ENCODE measurements at regions of chr1 and their contacts with region 1.

Region 1: GRCh38 chr1:84781946-84782771 is 91.9 kb upstream of the SSX2IP start:
- DNase-seq: peak; percentile 91
- ATAC-seq: peak; percentile 95
- H3K4me3 Mint-ChIP-seq: peak overlapping the region; percentile 54
- H3K27ac Mint-ChIP-seq: peak overlapping the region; percentile 64
- H3K4me1 Mint-ChIP-seq: peaks cover 15% of the 10 kb centered on the region
- H3K27me3 Mint-ChIP-seq: no peaks in the 10 kb centered on the region
- CTCF ChIP-seq: peak; percentile 80

Region 2: GRCh38 chr1:83990749-83991148 is 791.4 kb before region 1 on chr1:
- CTCF ChIA-PET with region 1: no interaction called
- POLR2A ChIA-PET with region 1: no interaction called
- DNase-seq: no peak
- ATAC-seq: no peak
- H3K4me3 Mint-ChIP-seq: no peak overlapping the region
- H3K27ac Mint-ChIP-seq: no peak overlapping the region
- H3K4me1 Mint-ChIP-seq: no peaks in the 10 kb centered on the region
- H3K27me3 Mint-ChIP-seq: no peaks in the 10 kb centered on the region
- CTCF ChIP-seq: no peak

Region 3: DNA sequence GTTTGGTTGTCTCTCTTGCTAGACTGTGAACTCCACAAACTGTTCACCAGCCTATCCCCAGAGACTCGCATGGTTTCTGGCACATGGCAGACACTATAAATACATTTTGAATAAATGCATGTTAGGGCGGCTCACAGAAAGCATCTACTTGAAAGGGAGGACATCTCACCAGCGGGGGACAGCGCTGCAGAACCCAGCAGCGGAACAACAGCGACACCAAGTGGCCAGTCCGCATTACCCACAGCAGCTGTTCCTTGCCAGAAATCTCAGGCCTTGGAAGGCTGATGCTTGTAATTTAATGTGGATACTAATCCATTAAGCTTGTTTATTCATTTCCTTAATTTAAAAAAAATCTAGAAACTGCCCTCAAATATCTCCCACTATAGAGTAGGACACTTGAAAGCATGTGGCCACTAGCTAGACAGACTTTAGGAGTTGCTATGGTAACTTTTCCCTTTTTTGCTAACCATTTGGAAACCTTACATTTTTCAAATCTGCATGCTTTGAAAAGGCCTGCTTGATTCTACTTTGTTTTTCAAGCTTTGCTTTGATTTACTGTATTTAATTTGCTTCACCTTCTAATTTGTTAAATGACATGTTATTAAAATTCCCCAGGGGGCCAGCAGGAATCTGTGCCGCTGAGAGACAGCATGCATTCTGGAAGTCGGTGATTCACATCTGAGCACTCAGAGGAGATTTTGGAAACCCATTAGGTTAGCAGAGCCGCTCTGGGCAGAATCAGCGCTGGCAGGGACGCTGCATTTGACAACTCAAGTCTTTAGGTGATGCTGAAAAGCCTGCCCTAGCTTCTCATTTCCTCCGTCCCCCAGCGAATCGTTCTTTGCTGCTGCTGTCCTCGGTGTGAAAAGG is 28.4 kb before region 1 on chr1:
- CTCF ChIA-PET with region 1: interaction called, 16 read pairs
- POLR2A ChIA-PET with region 1: no interaction called
- DNase-seq: peak; percentile 78
- ATAC-seq: peak; percentile 89
- H3K4me3 Mint-ChIP-seq: no peak overlapping the region
- H3K27ac Mint-ChIP-seq: no peak overlapping the region
- H3K4me1 Mint-ChIP-seq: peaks cover 59% of the 10 kb centered on the region
- H3K27me3 Mint-ChIP-seq: no peaks in the 10 kb centered on the region
- CTCF ChIP-seq: peak; percentile 84

Region 4: GRCh38 chr1:84763912-84764663 is 18.1 kb before region 1 on chr1:
- CTCF ChIA-PET with region 1: interaction called, 12 read pairs
- POLR2A ChIA-PET with region 1: no interaction called
- DNase-seq: peak; percentile 40
- ATAC-seq: peak; percentile 95
- H3K4me3 Mint-ChIP-seq: peak overlapping the region; percentile 36
- H3K27ac Mint-ChIP-seq: peak overlapping the region; percentile 4; the same call in 1 of the 2 replicates
- H3K4me1 Mint-ChIP-seq: peaks cover 17% of the 10 kb centered on the region
- H3K27me3 Mint-ChIP-seq: peaks cover 7% of the 10 kb centered on the region
- CTCF ChIP-seq: no peak

Region 5: GRCh38 chr1:84803604-84804003 is 21.4 kb after region 1 on chr1:
- CTCF ChIA-PET with region 1: interaction called, 13 read pairs
- POLR2A ChIA-PET with region 1: no interaction called
- DNase-seq: no peak
- ATAC-seq: no peak
- H3K4me3 Mint-ChIP-seq: no peak overlapping the region
- H3K27ac Mint-ChIP-seq: no peak overlapping the region
- H3K4me1 Mint-ChIP-seq: no peaks in the 10 kb centered on the region
- H3K27me3 Mint-ChIP-seq: no peaks in the 10 kb centered on the region
- CTCF ChIP-seq: no peak

Region 6: GRCh38 chr1:84842748-84843231 is 60.6 kb after region 1 on chr1:
- CTCF ChIA-PET with region 1: interaction called, 12 read pairs
- POLR2A ChIA-PET with region 1: no interaction called
- DNase-seq: no peak
- ATAC-seq: peak; percentile 73
- H3K4me3 Mint-ChIP-seq: no peak overlapping the region
- H3K27ac Mint-ChIP-seq: no peak overlapping the region; the same call in 1 of the 2 replicates
- H3K4me1 Mint-ChIP-seq: peaks cover 21% of the 10 kb centered on the region
- H3K27me3 Mint-ChIP-seq: no peaks in the 10 kb centered on the region
- CTCF ChIP-seq: no peak

Region 7: GRCh38 chr1:84936116-84936810 is 154.1 kb after region 1 on chr1:
- CTCF ChIA-PET with region 1: interaction called, 33 read pairs
- POLR2A ChIA-PET with region 1: no interaction called
- DNase-seq: no peak
- ATAC-seq: peak; percentile 78
- H3K4me3 Mint-ChIP-seq: no peak overlapping the region
- H3K27ac Mint-ChIP-seq: no peak overlapping the region
- H3K4me1 Mint-ChIP-seq: peaks cover 10% of the 10 kb centered on the region
- H3K27me3 Mint-ChIP-seq: no peaks in the 10 kb centered on the region; the same call in 1 of the 2 replicates
- CTCF ChIP-seq: peak; percentile 86

Region 8: GRCh38 chr1:84968101-84968500 is 185.9 kb after region 1 on chr1:
- CTCF ChIA-PET with region 1: no interaction called
- POLR2A ChIA-PET with region 1: no interaction called
- DNase-seq: no peak
- ATAC-seq: no peak
- H3K4me3 Mint-ChIP-seq: no peak overlapping the region
- H3K27ac Mint-ChIP-seq: no peak overlapping the region
- H3K4me1 Mint-ChIP-seq: no peaks in the 10 kb centered on the region
- H3K27me3 Mint-ChIP-seq: no peaks in the 10 kb centered on the region; the same call in 1 of the 2 replicates
- CTCF ChIP-seq: no peak

Measured in WTC11 (cell line).